ENCODE measurements at regions of chr12 and their contacts with region 1.

Region 1: GRCh38 chr12:39990122-39991101 is 115.5 kb downstream of the SLC2A13 start:
- DNase-seq: peak; percentile 46 to 79 (median 59)
- ATAC-seq: peak; percentile 67 to 83
- H3K4me3 ChIP-seq: no peak overlapping the region
- H3K27ac ChIP-seq: no peak overlapping the region
- H3K4me1 ChIP-seq: no peaks in the 10 kb centered on the region
- H3K27me3 ChIP-seq: no peaks in the 10 kb centered on the region

Region 2: GRCh38 chr12:39764944-39765560 is 225.4 kb before region 1 on chr12:
- intact Hi-C with region 1: loop called in 3 of 4 experiments (anchors 5 to 10 kb)
- DNase-seq: no peak
- ATAC-seq: no peak
- H3K4me3 ChIP-seq: no peak overlapping the region
- H3K27ac ChIP-seq: no peak overlapping the region
- H3K4me1 ChIP-seq: no peaks in the 10 kb centered on the region
- H3K27me3 ChIP-seq: no peaks in the 10 kb centered on the region

Region 3: DNA sequence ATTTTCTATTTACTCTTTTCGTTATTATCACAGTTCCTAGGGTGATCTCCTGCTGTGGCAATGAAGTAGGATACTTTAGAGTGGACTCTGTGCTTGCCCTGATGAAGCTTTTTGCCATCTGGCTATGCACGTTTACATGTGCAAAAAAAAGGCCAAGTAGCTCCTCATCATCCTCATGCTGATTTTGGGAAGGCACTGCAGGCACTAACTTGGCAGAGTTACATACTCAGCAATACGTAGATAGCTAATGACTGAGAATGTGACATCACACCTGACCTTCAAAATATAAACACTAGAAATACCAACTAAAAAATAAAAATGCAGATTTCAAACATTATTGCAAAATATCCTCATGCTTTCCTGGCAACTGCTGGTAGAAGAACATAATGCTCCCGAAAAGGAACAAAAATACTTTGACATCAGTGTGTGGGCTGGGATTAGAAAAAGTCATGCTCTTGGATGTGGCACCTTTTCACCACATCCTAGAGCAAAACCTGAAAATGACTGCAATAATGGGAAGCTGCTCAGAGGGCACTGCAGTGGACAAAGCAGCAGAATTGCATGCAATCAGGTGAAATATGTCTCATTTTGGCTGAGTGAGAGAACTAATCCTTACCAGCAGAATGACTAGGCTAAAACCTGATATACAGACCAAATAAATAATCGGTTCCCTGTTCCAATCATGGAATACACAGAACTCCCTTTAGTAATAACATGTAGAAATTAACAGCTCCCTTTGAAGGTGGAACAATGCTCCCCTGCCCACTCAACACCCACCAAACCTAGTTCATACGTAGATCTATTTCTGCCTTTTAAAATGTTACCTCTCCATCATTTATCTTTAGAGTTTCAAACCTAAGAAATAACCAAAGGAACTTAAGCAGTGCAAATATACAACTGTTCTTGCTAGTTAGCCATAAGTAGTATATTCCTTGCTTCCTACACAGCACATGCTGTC is 217.4 kb before region 1 on chr12:
- intact Hi-C with region 1: loop called in 3 of 4 experiments (anchors 5 to 10 kb)
- DNase-seq: no peak
- ATAC-seq: peak; percentile 16 to 49
- H3K4me3 ChIP-seq: no peak overlapping the region
- H3K27ac ChIP-seq: no peak overlapping the region
- H3K4me1 ChIP-seq: no peaks in the 10 kb centered on the region
- H3K27me3 ChIP-seq: no peaks in the 10 kb centered on the region